ENCODE measurements at regions of chr9 and their contacts with region 1.

Region 1: DNA sequence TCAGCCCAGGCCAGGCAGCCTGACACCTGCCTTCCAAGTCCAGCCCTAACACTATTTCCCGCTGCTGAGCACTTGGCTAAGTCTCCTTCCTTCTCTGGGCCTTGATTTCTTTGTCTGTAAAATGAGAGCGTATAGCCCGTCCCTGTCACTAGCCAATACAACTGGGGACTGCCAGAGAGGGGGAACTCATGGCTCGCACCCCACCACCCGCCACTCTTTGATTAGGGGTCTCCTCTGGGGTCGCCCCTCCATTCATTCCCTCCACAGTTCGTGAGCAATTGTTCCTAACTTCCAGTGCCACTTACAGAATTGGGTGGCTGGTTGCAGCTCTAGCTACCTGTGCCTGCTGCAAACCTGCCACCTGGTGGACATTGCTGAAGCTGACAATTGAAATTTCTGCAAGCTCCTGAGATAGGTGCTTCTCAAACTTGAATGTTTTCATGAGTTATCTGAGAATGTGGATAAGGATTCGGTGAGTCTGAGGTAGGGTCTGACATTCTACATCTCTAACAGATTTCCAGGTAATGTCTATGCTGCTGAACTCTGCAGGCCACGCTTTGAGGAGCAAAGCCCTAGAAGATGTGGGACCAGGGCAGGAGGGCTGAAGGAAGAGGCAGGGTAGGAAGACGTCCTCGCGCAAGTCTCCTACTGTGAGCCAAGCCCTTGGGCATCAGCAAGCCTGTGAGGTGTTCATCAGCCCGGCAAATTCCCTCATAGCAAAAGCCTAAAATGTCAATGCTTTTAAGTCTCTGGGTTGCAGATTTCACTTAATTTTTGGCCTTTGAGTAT is 13.3 kb upstream of the RECK start:
- DNase-seq: no peak
- H3K4me3 ChIP-seq: no peak overlapping the region
- H3K27ac ChIP-seq: no peak overlapping the region
- H3K4me1 ChIP-seq: no peaks in the 10 kb centered on the region
- H3K27me3 ChIP-seq: no peaks in the 10 kb centered on the region
- CTCF ChIP-seq: peak; percentile 34 to 68 (median 39)
- POLR2A ChIP-seq: no peak

Region 2: GRCh38 chr9:35954942-35955546 is 68.4 kb before region 1 on chr9:
- intact Hi-C with region 1: loop called (anchors 5 kb)
- DNase-seq: no peak
- H3K4me3 ChIP-seq: no peak overlapping the region
- H3K27ac ChIP-seq: no peak overlapping the region
- H3K4me1 ChIP-seq: no peaks in the 10 kb centered on the region
- H3K27me3 ChIP-seq: no peaks in the 10 kb centered on the region
- CTCF ChIP-seq: peak in 2 of 3 experiments; percentile 50 to 76
- POLR2A ChIP-seq: no peak

Region 3: DNA sequence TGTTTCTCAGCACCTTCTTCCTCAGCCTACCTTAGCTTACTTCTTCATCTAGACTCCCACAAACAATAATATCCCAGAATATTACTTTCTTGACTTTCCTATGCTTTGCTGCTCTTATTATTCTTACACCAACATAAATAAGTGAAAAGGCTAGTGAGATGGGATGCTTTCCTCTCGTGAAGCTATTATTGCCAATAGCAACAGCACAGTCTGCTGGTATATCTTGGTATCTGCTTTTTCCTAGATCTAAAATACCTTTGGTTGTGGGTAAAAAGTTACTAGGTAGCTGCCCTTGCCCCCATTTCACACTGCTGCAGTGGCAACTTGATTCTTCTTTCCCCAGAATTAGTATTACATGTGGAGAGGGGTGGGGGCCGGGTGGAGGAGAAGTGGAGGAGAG is 87.0 kb after region 1 on chr9:
- intact Hi-C with region 1: loop called (anchors 10 kb)
- DNase-seq: no peak
- H3K4me3 ChIP-seq: no peak overlapping the region
- H3K27ac ChIP-seq: no peak overlapping the region
- H3K4me1 ChIP-seq: no peaks in the 10 kb centered on the region
- H3K27me3 ChIP-seq: no peaks in the 10 kb centered on the region
- CTCF ChIP-seq: no peak
- POLR2A ChIP-seq: no peak

Measured in vagina (tissue), 2 donors.